ENCODE measurements at regions of chr17 and their contacts with region 1.

Region 1: DNA sequence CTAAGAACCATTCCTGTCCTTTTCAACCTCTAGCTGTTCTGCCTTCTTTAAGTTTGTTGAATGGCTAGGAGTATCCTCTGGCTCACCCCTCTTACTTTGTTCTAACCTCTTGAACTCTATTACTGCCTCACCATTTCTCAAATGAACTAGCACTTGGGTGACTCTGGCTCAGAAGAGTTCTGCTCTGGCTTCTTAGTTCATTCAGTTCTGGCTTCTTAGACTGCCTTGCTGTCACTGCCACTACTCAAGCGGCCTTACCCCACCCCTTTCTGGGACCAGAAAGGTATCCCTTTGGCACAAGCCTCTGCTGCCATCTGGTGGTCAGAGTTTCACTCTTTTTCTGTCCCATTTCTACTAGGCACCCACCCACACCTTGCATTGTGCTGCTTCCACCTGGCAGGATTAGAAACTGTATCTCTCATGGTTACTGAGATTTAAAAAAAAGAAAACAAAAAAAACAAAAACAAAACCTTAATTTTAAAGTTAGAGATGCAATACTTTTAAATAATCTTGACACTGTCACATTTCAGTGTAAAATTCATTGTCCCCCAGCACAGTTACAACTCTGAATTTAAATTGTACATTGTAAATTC is 6.8 kb upstream of the ABCA10 start:
- DNase-seq: peak; percentile 77 to 94 (median 81)
- ATAC-seq: peak; percentile 99
- H3K4me3 ChIP-seq: no peak overlapping the region
- H3K27ac ChIP-seq: peak overlapping the region; percentile 34; the same call in 2 of the 3 replicates
- H3K4me1 ChIP-seq: peaks cover 0 to 15% of the 10 kb centered on the region in 2 experiments; a peak in 2 of 5 replicates
- H3K27me3 ChIP-seq: no peaks in the 10 kb centered on the region
- CTCF ChIP-seq: peak; percentile 87 to 97 (median 96)
- EP300 ChIP-seq: 0 out of 2 replicates have a peak, but pooled peaks have one; percentile 11
- POLR2A ChIP-seq: no peak
- RAD21 ChIP-seq: peak; percentile 98 to 99

Region 2: DNA sequence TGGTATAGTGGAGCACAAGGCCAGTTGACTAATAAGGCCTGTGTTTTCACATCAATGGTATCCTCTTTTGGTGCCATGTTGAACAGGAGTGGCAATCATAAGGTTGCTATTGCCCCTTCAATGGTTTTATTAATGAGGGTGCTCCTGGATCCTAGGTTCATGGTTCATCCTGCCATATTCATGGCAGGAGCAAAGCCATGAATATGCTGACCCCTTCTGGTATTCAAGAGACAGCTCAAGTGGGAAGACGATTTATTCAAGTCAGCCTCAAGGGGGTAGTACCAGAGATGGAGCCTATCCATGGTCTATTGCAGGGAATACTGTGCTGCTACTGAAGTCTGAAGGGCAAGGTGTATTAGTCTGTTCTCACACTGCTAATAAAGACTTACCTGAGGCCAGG is 177.3 kb before region 1 on chr17:
- CTCF ChIA-PET with region 1: no interaction called
- POLR2A ChIA-PET with region 1: no interaction called
- in situ Hi-C with region 1: no loop called
- intact Hi-C with region 1: loop called (anchors 2 kb)
- DNase-seq: peak in 2 of 4 experiments; percentile 33 to 59
- ATAC-seq: peak; percentile 95
- H3K4me3 ChIP-seq: no peak overlapping the region
- H3K27ac ChIP-seq: no peak overlapping the region
- H3K4me1 ChIP-seq: 0 out of 5 replicates have a peak, but pooled peaks cover 0 to 1% of the 10 kb centered on the region in 2 experiments
- H3K27me3 ChIP-seq: no peaks in the 10 kb centered on the region
- CTCF ChIP-seq: peak; percentile 61 to 98 (median 97)
- EP300 ChIP-seq: no peak
- POLR2A ChIP-seq: no peak
- RAD21 ChIP-seq: peak; percentile 71 to 90

Region 3: GRCh38 chr17:69067274-69068047 is 168.0 kb before region 1 on chr17:
- CTCF ChIA-PET with region 1: no interaction called
- POLR2A ChIA-PET with region 1: no interaction called
- in situ Hi-C with region 1: loop called (anchors 5 kb)
- intact Hi-C with region 1: loop called (anchors 1 kb)
- DNase-seq: peak in 1 of 4 experiments; percentile 11
- ATAC-seq: peak; percentile 84
- H3K4me3 ChIP-seq: no peak overlapping the region
- H3K27ac ChIP-seq: no peak overlapping the region
- H3K4me1 ChIP-seq: peaks cover 15 to 16% of the 10 kb centered on the region in 2 experiments; a peak in 4 of 5 replicates
- H3K27me3 ChIP-seq: no peaks in the 10 kb centered on the region
- CTCF ChIP-seq: peak; percentile 31 to 49 (median 36); a peak in 4 of 6 replicates
- EP300 ChIP-seq: no peak
- POLR2A ChIP-seq: no peak
- RAD21 ChIP-seq: peak; percentile 34 to 75

Region 4: GRCh38 chr17:69188065-69188464 is 47.4 kb before region 1 on chr17:
- CTCF ChIA-PET with region 1: no interaction called
- POLR2A ChIA-PET with region 1: no interaction called
- in situ Hi-C with region 1: no loop called
- intact Hi-C with region 1: no loop called
- DNase-seq: no peak
- ATAC-seq: no peak
- H3K4me3 ChIP-seq: no peak overlapping the region
- H3K27ac ChIP-seq: no peak overlapping the region
- H3K4me1 ChIP-seq: no peaks in the 10 kb centered on the region; a peak in 1 of 5 replicates
- H3K27me3 ChIP-seq: no peaks in the 10 kb centered on the region
- CTCF ChIP-seq: no peak
- EP300 ChIP-seq: no peak
- POLR2A ChIP-seq: no peak
- RAD21 ChIP-seq: no peak

Region 5: DNA sequence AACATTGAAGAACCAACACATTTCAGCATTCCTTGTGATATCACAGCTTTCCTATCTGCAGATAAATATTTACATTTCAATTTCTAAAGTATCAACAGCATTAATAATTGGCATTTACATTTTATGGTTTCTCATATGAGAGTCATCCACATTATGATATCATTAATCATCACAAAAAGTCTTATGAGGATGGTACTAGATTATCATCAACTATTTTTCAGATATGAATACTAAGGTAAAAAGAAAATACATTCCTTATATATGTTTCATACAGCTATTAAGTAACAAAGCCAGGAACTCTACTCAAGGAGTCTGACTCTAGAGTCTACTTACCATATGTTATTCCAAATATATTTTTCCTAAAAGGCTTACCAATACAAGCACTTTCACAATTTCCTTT is 50.8 kb after region 1 on chr17:
- CTCF ChIA-PET with region 1: no interaction called
- POLR2A ChIA-PET with region 1: no interaction called
- in situ Hi-C with region 1: no loop called
- intact Hi-C with region 1: no loop called
- DNase-seq: no peak
- ATAC-seq: no peak
- H3K4me3 ChIP-seq: no peak overlapping the region
- H3K27ac ChIP-seq: no peak overlapping the region
- H3K4me1 ChIP-seq: no peaks in the 10 kb centered on the region
- H3K27me3 ChIP-seq: no peaks in the 10 kb centered on the region
- CTCF ChIP-seq: no peak
- EP300 ChIP-seq: no peak
- POLR2A ChIP-seq: no peak
- RAD21 ChIP-seq: no peak

Measured in K562 (cell line).